Right ventricle myocardium inferior (tissue), 1 donor: ENCODE measurements at regions of chr2 and their contacts with region 1.

Region 1: GRCh38 chr2:101111917-101112783 is 39.0 kb downstream of the TBC1D8 start:
- DNase-seq: no peak
- ATAC-seq: peak; percentile 86

Region 2: GRCh38 chr2:100427628-100428258 is 684.4 kb before region 1 on chr2:
- intact Hi-C with region 1: no loop called
- DNase-seq: no peak
- ATAC-seq: peak; percentile 72

Region 3: GRCh38 chr2:101064868-101065549 is 47.1 kb before region 1 on chr2:
- intact Hi-C with region 1: loop called (anchors 5 kb)
- DNase-seq: no peak
- ATAC-seq: peak; percentile 53

Region 4: GRCh38 chr2:101197215-101197745 is 85.1 kb after region 1 on chr2:
- intact Hi-C with region 1: no loop called
- DNase-seq: no peak
- ATAC-seq: no peak